K562 (cell line): ENCODE measurements at regions of chrX and their contacts with region 1.

Region 1: DNA sequence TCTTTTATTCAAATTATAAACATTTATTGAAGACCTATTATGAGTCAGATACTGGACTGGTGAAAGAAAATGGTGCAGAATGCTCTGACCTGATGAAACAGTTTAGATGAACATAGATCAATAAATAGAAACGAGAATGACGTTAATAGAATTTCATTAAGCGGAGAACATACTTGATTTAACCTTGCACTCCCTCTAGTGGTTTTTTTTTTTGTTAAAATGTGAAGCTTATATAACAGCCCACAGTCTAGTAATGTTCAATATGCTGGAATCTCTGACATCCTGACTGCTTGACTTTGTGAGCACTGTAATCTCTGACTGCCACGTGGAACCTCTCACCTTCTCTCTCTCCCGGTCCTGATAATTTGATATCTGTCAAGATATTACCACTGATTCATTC is 32.3 kb downstream of the HDAC8 start:
- DNase-seq: peak in 3 of 4 experiments; percentile 3 to 13 (median 7)
- ATAC-seq: peak; percentile 81
- H3K4me3 ChIP-seq: no peak overlapping the region
- H3K27ac ChIP-seq: no peak overlapping the region
- H3K4me1 ChIP-seq: no peaks in the 10 kb centered on the region; a peak in 2 of 5 replicates
- H3K27me3 ChIP-seq: no peaks in the 10 kb centered on the region
- CTCF ChIP-seq: peak in 1 of 3 experiments; percentile 52; a peak in 2 of 6 replicates
- EP300 ChIP-seq: no peak
- POLR2A ChIP-seq: no peak
- RAD21 ChIP-seq: peak; percentile 28 to 45; a peak in 3 of 4 replicates

Region 2: GRCh38 chrX:72245461-72246089 is 294.7 kb before region 1 on chrX:
- CTCF ChIA-PET with region 1: interaction called, 3 read pairs
- POLR2A ChIA-PET with region 1: no interaction called
- in situ Hi-C with region 1: no loop called
- intact Hi-C with region 1: loop called (anchors 5 kb)
- DNase-seq: peak; percentile 67 to 72 (median 70)
- ATAC-seq: peak; percentile 88
- H3K4me3 ChIP-seq: no peak overlapping the region
- H3K27ac ChIP-seq: no peak overlapping the region
- H3K4me1 ChIP-seq: peaks cover 0 to 5% of the 10 kb centered on the region in 2 experiments; a peak in 3 of 5 replicates
- H3K27me3 ChIP-seq: no peaks in the 10 kb centered on the region
- CTCF ChIP-seq: peak; percentile 73 to 81 (median 80)
- EP300 ChIP-seq: no peak
- POLR2A ChIP-seq: no peak
- RAD21 ChIP-seq: peak; percentile 46 to 80; a peak in 3 of 4 replicates

Region 3: GRCh38 chrX:72297953-72298730 is 242.2 kb before region 1 on chrX:
- CTCF ChIA-PET with region 1: interaction called, 4 read pairs
- POLR2A ChIA-PET with region 1: no interaction called
- in situ Hi-C with region 1: loop called (anchors 25 kb)
- intact Hi-C with region 1: loop called (anchors 5 kb)
- DNase-seq: peak in 2 of 4 experiments; percentile 40 to 46
- ATAC-seq: peak; percentile 94
- H3K4me3 ChIP-seq: no peak overlapping the region
- H3K27ac ChIP-seq: no peak overlapping the region
- H3K4me1 ChIP-seq: no peaks in the 10 kb centered on the region; a peak in 1 of 5 replicates
- H3K27me3 ChIP-seq: peaks cover 0 to 6% of the 10 kb centered on the region in 2 experiments; a peak in 1 of 5 replicates
- CTCF ChIP-seq: peak; percentile 45 to 53 (median 51)
- EP300 ChIP-seq: no peak
- POLR2A ChIP-seq: no peak
- RAD21 ChIP-seq: peak in 1 of 2 experiments; percentile 49; a peak in 2 of 4 replicates

Region 4: GRCh38 chrX:72306851-72307645 is 233.3 kb before region 1 on chrX:
- CTCF ChIA-PET with region 1: interaction called, 3 read pairs
- POLR2A ChIA-PET with region 1: no interaction called
- in situ Hi-C with region 1: loop called (anchors 25 kb)
- intact Hi-C with region 1: no loop called
- DNase-seq: peak; percentile 35 to 57 (median 47)
- ATAC-seq: peak; percentile 85
- H3K4me3 ChIP-seq: peak overlapping the region; percentile 40
- H3K27ac ChIP-seq: 0 out of 3 replicates have a peak overlapping the region, but pooled peaks have one; percentile 30
- H3K4me1 ChIP-seq: peaks cover 2 to 34% of the 10 kb centered on the region in 2 experiments; a peak in 3 of 5 replicates
- H3K27me3 ChIP-seq: peaks cover 0 to 19% of the 10 kb centered on the region in 2 experiments; a peak in 1 of 5 replicates
- CTCF ChIP-seq: no peak
- EP300 ChIP-seq: no peak
- POLR2A ChIP-seq: no peak
- RAD21 ChIP-seq: no peak